ENCODE measurements at regions of chr6 and their contacts with region 1.

Region 1: DNA sequence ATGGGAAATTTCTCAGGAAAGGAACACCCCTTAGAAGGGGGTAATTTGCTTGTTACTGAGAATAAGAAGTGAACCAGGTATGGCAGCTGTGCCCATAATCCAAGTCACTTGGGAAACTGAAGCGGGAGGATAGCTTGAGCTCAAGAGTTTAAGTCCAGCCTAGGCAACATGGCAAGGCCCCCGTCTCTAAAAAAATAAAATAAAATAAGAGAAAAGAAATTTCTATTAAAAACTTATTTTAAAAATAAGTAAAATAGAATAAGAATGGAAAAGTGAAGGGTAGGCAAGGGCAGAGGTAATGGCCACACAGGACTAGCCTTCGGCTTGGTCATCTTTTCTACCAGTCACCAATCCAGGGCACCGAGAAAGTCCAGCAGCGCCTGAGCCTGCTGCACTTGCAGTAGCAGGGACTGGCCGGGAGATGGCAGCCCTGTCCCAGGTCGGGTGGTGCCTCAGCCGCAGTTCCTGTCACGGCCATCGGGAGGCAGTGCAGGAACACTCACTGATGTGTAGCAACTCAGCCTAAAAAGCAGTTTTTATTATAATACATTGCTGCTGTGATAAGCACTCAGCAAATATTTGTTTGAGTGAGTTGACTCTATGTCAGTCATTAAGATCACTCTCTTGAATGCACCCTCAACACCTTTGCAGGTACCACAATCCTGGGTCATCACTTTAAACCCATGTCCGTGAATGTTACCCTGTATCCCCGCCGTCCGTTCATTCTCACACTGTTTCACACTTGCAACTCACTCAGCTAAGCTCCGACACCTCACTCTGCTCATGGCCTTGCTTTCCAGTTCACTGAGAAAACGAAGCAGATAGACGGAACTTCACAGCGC is 23.2 kb upstream of the GCM1 start:
- DNase-seq: peak; percentile 88 to 94
- ATAC-seq: peak; percentile 100
- H3K4me3 ChIP-seq: no peak overlapping the region
- H3K4me3 Mint-ChIP-seq: no peak overlapping the region
- H3K27ac ChIP-seq: peak overlapping the region; percentile 34
- H3K27ac Mint-ChIP-seq: no peak overlapping the region
- H3K4me1 ChIP-seq: no peaks in the 10 kb centered on the region
- H3K4me1 Mint-ChIP-seq: no peaks in the 10 kb centered on the region
- H3K27me3 ChIP-seq: no peaks in the 10 kb centered on the region
- H3K27me3 Mint-ChIP-seq: peaks cover 0 to 4% of the 10 kb centered on the region in 2 donors
- CTCF ChIP-seq: peak; percentile 100

Region 2: DNA sequence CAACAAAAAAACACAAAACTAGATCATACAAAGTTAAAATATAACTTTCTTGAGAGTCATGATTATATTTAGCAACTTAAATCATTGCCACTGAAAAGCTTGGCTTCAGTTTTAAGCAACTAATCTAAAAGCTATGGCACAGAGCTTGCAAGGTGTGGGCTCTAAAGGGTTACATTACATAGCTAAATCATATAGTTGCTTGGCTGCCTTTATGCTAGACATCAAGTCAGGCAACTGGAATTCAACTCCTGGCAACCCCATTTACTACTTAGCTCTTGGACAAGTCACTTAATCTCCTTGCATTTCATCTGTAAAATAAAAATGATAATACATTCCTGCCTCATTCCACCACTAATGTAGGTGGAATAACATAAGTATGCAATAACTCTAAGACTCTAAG is 17.7 kb after region 1 on chr6:
- intact Hi-C with region 1: no loop called
- DNase-seq: no peak
- ATAC-seq: no peak
- H3K4me3 ChIP-seq: no peak overlapping the region
- H3K4me3 Mint-ChIP-seq: no peak overlapping the region
- H3K27ac ChIP-seq: no peak overlapping the region
- H3K27ac Mint-ChIP-seq: no peak overlapping the region
- H3K4me1 ChIP-seq: peaks cover 19% of the 10 kb centered on the region
- H3K4me1 Mint-ChIP-seq: peaks cover 7 to 11% of the 10 kb centered on the region in 2 donors
- H3K27me3 ChIP-seq: no peaks in the 10 kb centered on the region
- H3K27me3 Mint-ChIP-seq: no peaks in the 10 kb centered on the region
- CTCF ChIP-seq: no peak

Region 3: GRCh38 chr6:53294095-53294494 is 122.3 kb after region 1 on chr6:
- intact Hi-C with region 1: loop called (anchors 5 kb)
- DNase-seq: peak in 1 of 2 donors; percentile 51
- ATAC-seq: peak in 1 of 3 donors; percentile 41
- H3K4me3 ChIP-seq: no peak overlapping the region
- H3K4me3 Mint-ChIP-seq: no peak overlapping the region
- H3K27ac ChIP-seq: no peak overlapping the region
- H3K27ac Mint-ChIP-seq: peak overlapping the region; percentile 24 to 88
- H3K4me1 ChIP-seq: peaks cover 27% of the 10 kb centered on the region
- H3K4me1 Mint-ChIP-seq: peaks cover 76 to 78% of the 10 kb centered on the region in 2 donors
- H3K27me3 ChIP-seq: no peaks in the 10 kb centered on the region
- H3K27me3 Mint-ChIP-seq: no peaks in the 10 kb centered on the region
- CTCF ChIP-seq: peak; percentile 44

Region 4: GRCh38 chr6:53410508-53411258 is 238.9 kb after region 1 on chr6:
- intact Hi-C with region 1: loop called (anchors 1 kb)
- DNase-seq: peak; percentile 36 to 81
- ATAC-seq: peak; percentile 88 to 100 (median 96)
- H3K4me3 ChIP-seq: no peak overlapping the region
- H3K4me3 Mint-ChIP-seq: no peak overlapping the region
- H3K27ac ChIP-seq: no peak overlapping the region
- H3K27ac Mint-ChIP-seq: no peak overlapping the region
- H3K4me1 ChIP-seq: no peaks in the 10 kb centered on the region
- H3K4me1 Mint-ChIP-seq: no peaks in the 10 kb centered on the region
- H3K27me3 ChIP-seq: no peaks in the 10 kb centered on the region
- H3K27me3 Mint-ChIP-seq: no peaks in the 10 kb centered on the region
- CTCF ChIP-seq: peak; percentile 70

Region 5: DNA sequence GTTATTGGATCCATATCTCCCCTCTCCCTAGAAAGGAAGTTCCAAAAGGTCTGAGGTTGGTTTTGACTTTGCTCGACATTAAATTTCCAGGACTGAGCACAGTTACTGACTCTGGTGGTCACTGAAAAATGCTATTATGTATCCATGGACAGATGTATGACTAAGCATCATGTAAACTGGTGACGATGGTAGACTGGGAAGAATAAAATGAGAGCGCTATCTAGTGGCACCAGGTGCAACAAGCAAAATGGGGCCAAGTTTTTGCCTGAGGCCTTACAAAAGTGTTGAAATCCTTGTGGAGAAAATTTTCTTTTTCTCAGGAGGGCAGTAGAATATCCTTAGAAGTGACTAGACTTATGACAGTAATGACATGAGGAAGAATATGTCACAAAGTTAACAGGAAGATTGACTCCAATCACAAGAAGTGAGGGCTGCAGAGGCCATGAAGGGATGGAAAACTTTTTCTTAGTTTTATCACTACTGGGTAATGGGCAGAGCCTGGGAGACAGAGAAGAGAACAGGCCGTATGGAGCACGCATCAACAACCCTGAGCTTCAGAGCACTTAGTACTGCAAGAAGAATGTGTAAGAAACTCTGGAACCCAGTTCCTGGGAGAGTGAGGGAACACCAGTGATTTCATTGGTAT is 265.9 kb after region 1 on chr6:
- intact Hi-C with region 1: loop called (anchors 1 kb)
- DNase-seq: peak in 1 of 2 donors; percentile 58
- ATAC-seq: peak; percentile 49 to 78 (median 75)
- H3K4me3 ChIP-seq: no peak overlapping the region
- H3K4me3 Mint-ChIP-seq: no peak overlapping the region
- H3K27ac ChIP-seq: no peak overlapping the region
- H3K27ac Mint-ChIP-seq: peak overlapping the region in 1 of 2 donors; percentile 15
- H3K4me1 ChIP-seq: no peaks in the 10 kb centered on the region
- H3K4me1 Mint-ChIP-seq: peaks cover 5% of the 10 kb centered on the region in 2 donors
- H3K27me3 ChIP-seq: no peaks in the 10 kb centered on the region
- H3K27me3 Mint-ChIP-seq: peaks cover 2 to 15% of the 10 kb centered on the region in 2 donors
- CTCF ChIP-seq: peak; percentile 43

Region 6: DNA sequence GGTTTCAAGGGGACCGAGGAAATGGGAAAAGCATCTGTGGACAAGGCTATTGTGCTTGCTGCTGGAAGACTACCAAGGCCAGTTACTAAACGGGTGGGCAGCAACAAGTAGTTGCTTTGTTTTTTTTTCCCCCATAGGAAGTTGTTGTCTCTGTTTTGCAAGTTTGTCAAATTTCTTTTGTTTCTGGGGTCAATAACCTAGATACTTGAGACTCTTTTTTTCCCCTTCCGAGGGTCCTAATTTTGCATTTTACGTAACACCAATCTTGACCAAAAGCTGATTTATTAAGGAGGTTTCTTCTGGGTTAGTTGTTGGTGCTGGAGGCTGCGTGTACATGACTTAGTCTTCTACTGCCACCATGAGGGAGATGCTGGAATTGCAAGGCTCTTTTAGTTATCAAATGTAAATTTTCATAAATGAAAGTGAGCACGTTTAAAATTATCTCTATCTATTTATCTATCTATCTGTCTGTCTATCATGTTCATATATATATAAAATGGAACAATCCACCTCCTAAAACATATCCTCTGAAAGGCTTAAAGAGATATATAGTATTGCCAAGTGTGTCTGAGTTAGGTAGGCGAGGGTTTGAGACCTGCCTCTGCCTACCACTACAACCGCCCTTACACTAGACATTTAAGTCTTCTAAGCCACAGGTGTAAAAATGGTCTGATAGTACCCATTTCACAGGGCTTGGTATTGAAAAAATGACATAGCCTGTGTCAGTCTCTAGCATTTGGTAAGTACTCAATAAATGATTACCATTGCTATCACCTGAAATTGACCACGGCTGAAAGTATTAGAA is 312.9 kb after region 1 on chr6:
- intact Hi-C with region 1: loop called (anchors 1 kb)
- DNase-seq: peak; percentile 51 to 87
- ATAC-seq: peak; percentile 79 to 84 (median 81)
- H3K4me3 ChIP-seq: no peak overlapping the region
- H3K4me3 Mint-ChIP-seq: no peak overlapping the region
- H3K27ac ChIP-seq: no peak overlapping the region
- H3K27ac Mint-ChIP-seq: no peak overlapping the region
- H3K4me1 ChIP-seq: peaks cover 3% of the 10 kb centered on the region
- H3K4me1 Mint-ChIP-seq: peaks cover 0 to 6% of the 10 kb centered on the region in 2 donors
- H3K27me3 ChIP-seq: peaks cover 8% of the 10 kb centered on the region
- H3K27me3 Mint-ChIP-seq: peaks cover 16 to 26% of the 10 kb centered on the region in 2 donors
- CTCF ChIP-seq: peak; percentile 98

Region 7: DNA sequence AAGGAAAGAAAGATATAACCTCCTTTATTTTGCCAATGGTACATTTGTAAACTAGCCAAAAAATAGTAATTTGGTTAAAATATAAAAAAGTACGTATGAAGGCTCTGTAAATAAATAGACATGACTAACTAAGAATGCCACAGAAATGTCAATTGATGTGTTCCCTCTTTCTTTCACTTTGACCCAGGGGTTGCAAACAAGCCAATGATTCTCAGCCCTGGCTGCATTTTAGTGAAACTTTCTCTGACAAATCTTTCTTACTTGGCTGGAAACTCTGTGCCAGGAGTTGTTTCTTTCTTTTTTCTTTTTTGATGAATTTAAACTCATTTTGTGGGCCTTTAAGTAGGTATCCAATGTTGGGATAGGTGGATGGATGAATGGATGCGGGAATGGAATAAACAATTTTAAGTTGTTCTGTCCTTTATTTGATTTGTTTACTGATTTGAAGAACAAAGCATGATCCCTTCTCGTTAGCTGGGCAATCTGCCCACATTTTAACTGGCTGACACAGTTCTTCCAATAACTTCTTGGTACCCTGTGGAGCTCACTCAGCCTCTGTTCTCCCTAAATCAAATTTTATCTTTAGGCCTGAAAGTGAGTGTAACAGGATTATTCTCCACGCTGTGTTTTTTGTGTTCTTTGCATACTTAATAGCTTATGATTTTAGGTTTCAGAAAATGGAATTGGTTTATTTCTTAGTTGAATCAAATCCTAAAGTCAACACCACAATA is 431.7 kb after region 1 on chr6:
- intact Hi-C with region 1: no loop called
- DNase-seq: no peak
- ATAC-seq: no peak
- H3K4me3 ChIP-seq: no peak overlapping the region
- H3K4me3 Mint-ChIP-seq: no peak overlapping the region
- H3K27ac ChIP-seq: no peak overlapping the region
- H3K27ac Mint-ChIP-seq: no peak overlapping the region
- H3K4me1 ChIP-seq: no peaks in the 10 kb centered on the region
- H3K4me1 Mint-ChIP-seq: no peaks in the 10 kb centered on the region
- H3K27me3 ChIP-seq: no peaks in the 10 kb centered on the region
- H3K27me3 Mint-ChIP-seq: peaks cover 0 to 5% of the 10 kb centered on the region in 2 donors
- CTCF ChIP-seq: no peak

Region 8: DNA sequence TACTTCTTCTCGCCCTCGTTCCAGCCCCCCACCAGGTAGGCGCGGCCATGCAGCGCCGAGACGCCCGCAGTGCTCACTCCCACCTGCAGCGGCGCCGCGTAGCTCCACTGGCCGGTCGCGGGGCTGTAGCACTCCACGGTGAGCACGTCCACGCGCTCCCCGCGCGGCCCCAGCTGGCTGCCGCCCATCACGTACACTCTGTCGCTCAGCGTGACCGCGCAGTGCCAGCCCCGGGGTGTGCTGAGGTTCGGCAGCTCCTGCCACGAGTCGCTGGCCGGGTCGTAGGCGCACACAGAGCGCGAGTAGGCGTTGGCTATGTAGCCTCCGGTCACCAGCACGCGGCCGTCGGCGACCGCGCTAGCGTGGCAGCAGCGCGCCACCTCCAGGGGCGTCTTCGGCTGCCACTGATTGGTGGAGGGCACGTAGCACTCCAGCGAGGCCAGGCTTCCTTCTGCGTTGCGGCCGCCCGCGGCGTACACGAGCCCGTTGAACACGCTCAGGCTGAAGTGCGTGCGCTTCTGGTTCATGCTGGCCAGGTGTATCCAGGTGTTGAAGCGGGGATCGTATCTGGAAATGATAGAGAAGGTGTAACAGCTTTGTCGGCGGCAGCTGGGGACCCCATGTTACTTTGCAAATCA is 480.1 kb after region 1 on chr6:
- intact Hi-C with region 1: loop called (anchors 5 kb)
- DNase-seq: peak; percentile 72 to 90
- ATAC-seq: peak; percentile 85 to 90 (median 86)
- H3K4me3 ChIP-seq: peak overlapping the region; percentile 56
- H3K4me3 Mint-ChIP-seq: peak overlapping the region; percentile 96
- H3K27ac ChIP-seq: peak overlapping the region; percentile 20
- H3K27ac Mint-ChIP-seq: peak overlapping the region; percentile 85 to 93
- H3K4me1 ChIP-seq: peaks cover 11% of the 10 kb centered on the region
- H3K4me1 Mint-ChIP-seq: peaks cover 32 to 36% of the 10 kb centered on the region in 2 donors
- H3K27me3 ChIP-seq: no peaks in the 10 kb centered on the region
- H3K27me3 Mint-ChIP-seq: peaks cover 0 to 3% of the 10 kb centered on the region in 2 donors
- CTCF ChIP-seq: no peak

Region 9: DNA sequence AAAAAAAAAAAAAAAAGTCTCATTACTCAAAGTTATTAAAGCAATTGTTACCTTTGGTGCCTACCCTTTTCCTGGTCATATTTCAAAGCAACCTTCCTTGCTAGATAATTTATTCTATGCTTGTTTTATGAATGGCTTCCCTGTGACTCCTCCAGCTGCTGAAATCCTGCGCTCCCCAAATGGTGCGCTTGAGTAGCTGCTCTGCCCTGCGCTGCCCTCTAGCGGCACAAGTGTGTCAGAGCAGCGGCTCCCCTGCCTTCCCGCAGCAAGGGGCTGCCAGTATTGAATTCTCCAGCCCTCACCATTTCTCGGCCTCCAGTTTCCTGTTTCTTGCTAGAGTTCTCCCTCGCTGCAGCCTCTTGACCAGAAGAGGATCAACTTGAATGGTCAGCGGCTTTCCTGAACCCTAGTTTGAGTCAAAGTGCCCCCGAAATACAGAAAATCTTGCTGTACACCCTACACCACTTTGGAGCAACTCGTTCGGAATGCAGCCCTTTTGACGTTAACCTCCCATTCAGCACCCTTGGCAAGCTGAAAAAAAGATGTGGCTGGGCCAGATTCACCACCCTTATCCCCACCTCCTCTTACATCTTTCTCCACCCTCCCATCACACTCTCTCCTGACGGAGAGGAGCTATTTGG is 554.1 kb after region 1 on chr6:
- intact Hi-C with region 1: loop called (anchors 5 kb)
- DNase-seq: peak; percentile 69 to 87
- ATAC-seq: peak; percentile 91 to 98 (median 96)
- H3K4me3 ChIP-seq: no peak overlapping the region
- H3K4me3 Mint-ChIP-seq: no peak overlapping the region
- H3K27ac ChIP-seq: no peak overlapping the region
- H3K27ac Mint-ChIP-seq: no peak overlapping the region
- H3K4me1 ChIP-seq: peaks cover 3% of the 10 kb centered on the region
- H3K4me1 Mint-ChIP-seq: peaks cover 12 to 13% of the 10 kb centered on the region in 2 donors
- H3K27me3 ChIP-seq: no peaks in the 10 kb centered on the region
- H3K27me3 Mint-ChIP-seq: peaks cover 16 to 34% of the 10 kb centered on the region in 2 donors
- CTCF ChIP-seq: peak; percentile 93